Endothelial cell of umbilical vein (primary cell): ENCODE measurements at regions of chr17 and their contacts with region 1.

Region 1: GRCh38 chr17:79045842-79046196 is 21.9 kb downstream of the C1QTNF1 start:
- DNase-seq: peak; percentile 79
- H3K4me3 ChIP-seq: no peak overlapping the region
- H3K27ac ChIP-seq: no peak overlapping the region
- H3K4me1 ChIP-seq: no peaks in the 10 kb centered on the region
- H3K27me3 ChIP-seq: no peaks in the 10 kb centered on the region
- CTCF ChIP-seq: peak; percentile 90 to 96
- POLR2A ChIP-seq: no peak

Region 2: GRCh38 chr17:78986048-78986648 is 59.7 kb before region 1 on chr17:
- CTCF ChIA-PET with region 1: interaction called, 15 read pairs
- POLR2A ChIA-PET with region 1: no interaction called
- dilution Hi-C with region 1: no loop called
- intact Hi-C with region 1: loop called (anchors 2 kb)
- DNase-seq: peak; percentile 60
- H3K4me3 ChIP-seq: peak overlapping the region in 1 of 3 experiments; percentile 49
- H3K27ac ChIP-seq: peak overlapping the region; percentile 96
- H3K4me1 ChIP-seq: peaks cover 28% of the 10 kb centered on the region
- H3K27me3 ChIP-seq: no peaks in the 10 kb centered on the region
- CTCF ChIP-seq: peak; percentile 12 to 20
- POLR2A ChIP-seq: no peak

Region 3: DNA sequence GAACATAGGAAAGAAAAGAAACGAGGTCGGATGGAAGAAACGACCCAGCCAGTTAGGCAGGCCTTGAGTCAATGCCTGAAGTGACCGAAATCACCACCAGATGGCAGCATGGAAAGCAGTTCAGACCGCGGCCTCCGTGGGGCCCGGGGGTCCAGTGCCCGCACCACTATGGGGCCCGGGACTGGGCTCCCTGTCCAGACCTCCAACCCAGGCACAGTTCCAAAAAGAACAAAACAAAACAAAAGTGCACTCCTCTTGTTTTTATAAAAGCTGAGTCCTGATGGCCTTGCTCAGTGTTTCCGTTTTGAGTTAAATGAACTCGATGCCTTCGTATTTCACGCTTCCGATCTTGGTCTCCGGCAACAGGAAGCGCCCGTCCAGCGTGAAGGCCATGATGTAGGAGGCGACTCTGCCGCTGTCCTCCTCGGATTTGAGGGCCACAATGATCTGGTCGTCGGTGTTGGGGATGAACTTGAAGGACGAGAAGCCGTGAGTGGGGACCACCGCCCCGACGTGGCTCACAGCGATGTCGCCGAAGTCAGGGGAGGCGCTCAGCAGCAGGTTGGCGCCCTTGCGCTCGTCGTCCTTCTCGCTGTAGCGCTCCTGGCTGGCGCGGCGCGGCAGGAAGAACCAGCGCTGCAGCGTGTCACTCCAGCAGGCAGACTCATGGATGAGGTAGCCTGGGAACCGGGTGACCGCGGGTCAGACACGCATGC is 52.4 kb before region 1 on chr17:
- CTCF ChIA-PET with region 1: interaction called, 4 read pairs
- POLR2A ChIA-PET with region 1: no interaction called
- dilution Hi-C with region 1: no loop called
- intact Hi-C with region 1: loop called (anchors 1 kb)
- DNase-seq: peak; percentile 72
- H3K4me3 ChIP-seq: no peak overlapping the region
- H3K27ac ChIP-seq: peak overlapping the region; percentile 36
- H3K4me1 ChIP-seq: peaks cover 14% of the 10 kb centered on the region
- H3K27me3 ChIP-seq: no peaks in the 10 kb centered on the region
- CTCF ChIP-seq: peak; percentile 85 to 86
- POLR2A ChIP-seq: no peak

Region 4: GRCh38 chr17:79019632-79020584 is 25.9 kb before region 1 on chr17:
- CTCF ChIA-PET with region 1: interaction called, 75 read pairs
- POLR2A ChIA-PET with region 1: no interaction called
- dilution Hi-C with region 1: no loop called
- intact Hi-C with region 1: loop called (anchors 1 kb)
- DNase-seq: peak; percentile 67
- H3K4me3 ChIP-seq: no peak overlapping the region
- H3K27ac ChIP-seq: no peak overlapping the region
- H3K4me1 ChIP-seq: peaks cover 7% of the 10 kb centered on the region
- H3K27me3 ChIP-seq: peaks cover 0 to 10% of the 10 kb centered on the region in 2 experiments
- CTCF ChIP-seq: peak; percentile 59 to 63
- POLR2A ChIP-seq: no peak

Region 5: GRCh38 chr17:79027925-79028813 is 17.6 kb before region 1 on chr17:
- CTCF ChIA-PET with region 1: interaction called, 91 read pairs
- POLR2A ChIA-PET with region 1: no interaction called
- dilution Hi-C with region 1: no loop called
- intact Hi-C with region 1: no loop called
- DNase-seq: no peak
- H3K4me3 ChIP-seq: no peak overlapping the region
- H3K27ac ChIP-seq: no peak overlapping the region
- H3K4me1 ChIP-seq: peaks cover 28% of the 10 kb centered on the region
- H3K27me3 ChIP-seq: peaks cover 0 to 20% of the 10 kb centered on the region in 2 experiments
- CTCF ChIP-seq: peak; percentile 9 to 13
- POLR2A ChIP-seq: no peak

Region 6: GRCh38 chr17:79082311-79083190 is 36.7 kb after region 1 on chr17:
- CTCF ChIA-PET with region 1: interaction called, 35 read pairs
- POLR2A ChIA-PET with region 1: no interaction called
- dilution Hi-C with region 1: no loop called
- intact Hi-C with region 1: loop called (anchors 1 kb)
- DNase-seq: peak; percentile 30
- H3K4me3 ChIP-seq: no peak overlapping the region
- H3K27ac ChIP-seq: no peak overlapping the region
- H3K4me1 ChIP-seq: no peaks in the 10 kb centered on the region
- H3K27me3 ChIP-seq: no peaks in the 10 kb centered on the region
- CTCF ChIP-seq: peak; percentile 90
- POLR2A ChIP-seq: no peak

Region 7: DNA sequence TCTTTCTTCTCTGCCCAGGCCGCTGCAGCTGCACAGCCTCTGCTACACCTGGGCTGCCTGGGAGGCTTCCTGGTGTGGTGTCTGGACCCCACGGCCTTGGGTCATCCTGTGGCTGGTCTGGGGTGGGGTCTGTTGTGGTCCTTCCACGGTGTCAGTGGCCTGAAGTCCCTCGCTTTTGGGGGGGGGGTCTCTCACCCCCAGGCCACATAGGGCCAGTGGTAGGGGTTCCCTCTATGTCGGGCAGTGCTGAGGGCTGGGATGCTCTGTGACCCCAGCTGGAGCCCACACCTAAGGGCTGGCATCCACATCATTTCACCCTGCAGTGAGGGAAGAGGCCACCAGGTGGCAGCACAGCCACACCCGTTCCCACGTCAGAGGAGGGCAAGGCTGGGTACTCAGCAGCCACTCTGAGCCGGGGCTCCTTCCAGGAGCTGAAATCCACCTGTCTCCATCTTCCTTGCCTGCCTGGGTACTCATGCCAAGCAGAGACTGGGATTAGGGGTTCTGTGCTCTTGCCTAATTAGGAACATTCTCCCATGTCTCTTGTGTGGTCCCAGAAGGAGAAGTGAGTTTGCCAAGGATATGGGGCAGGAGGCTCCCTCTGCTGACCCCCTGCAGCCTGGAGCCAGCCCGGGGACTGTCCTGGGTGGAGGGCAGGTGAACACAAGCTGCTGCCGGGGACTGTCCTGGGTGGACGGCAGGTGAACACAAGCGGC is 41.8 kb after region 1 on chr17:
- CTCF ChIA-PET with region 1: interaction called, 35 read pairs
- POLR2A ChIA-PET with region 1: no interaction called
- dilution Hi-C with region 1: no loop called
- intact Hi-C with region 1: loop called (anchors 1 kb)
- DNase-seq: peak; percentile 51
- H3K4me3 ChIP-seq: no peak overlapping the region
- H3K27ac ChIP-seq: no peak overlapping the region
- H3K4me1 ChIP-seq: no peaks in the 10 kb centered on the region
- H3K27me3 ChIP-seq: no peaks in the 10 kb centered on the region
- CTCF ChIP-seq: peak; percentile 81 to 88
- POLR2A ChIP-seq: no peak